Endothelial cell of umbilical vein (primary cell): ENCODE measurements at regions of chr1 and their contacts with region 1.

Region 1: DNA sequence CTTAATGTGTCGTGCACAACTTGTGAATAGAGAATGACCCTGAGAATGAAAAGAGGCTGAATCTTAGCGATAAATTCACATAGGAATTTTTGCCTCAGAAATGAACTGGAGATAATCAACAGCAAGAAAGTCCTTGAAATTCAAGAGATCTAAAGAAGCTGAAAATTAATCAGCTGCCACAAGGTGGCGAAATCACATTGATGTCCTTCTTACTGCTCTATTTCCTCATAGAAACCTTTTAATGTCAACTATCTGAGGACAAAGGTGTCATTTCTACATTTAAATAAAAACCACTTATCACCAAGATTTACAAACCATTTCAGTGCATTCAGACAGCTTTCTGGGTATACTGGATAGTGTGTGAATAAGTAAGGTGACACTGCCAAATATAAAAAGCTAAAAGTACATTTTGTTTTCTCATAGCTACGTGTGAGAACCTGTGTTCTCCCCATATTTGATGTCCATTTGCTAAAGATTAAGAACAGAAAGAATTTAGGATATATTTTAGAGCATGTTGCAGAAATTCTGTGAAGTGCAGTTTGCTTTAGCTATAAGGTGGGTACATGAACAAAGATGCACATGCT is 485.3 kb upstream of the PTBP2 start:
- DNase-seq: peak; percentile 80
- H3K4me3 ChIP-seq: no peak overlapping the region
- H3K27ac ChIP-seq: no peak overlapping the region
- H3K4me1 ChIP-seq: peaks cover 3% of the 10 kb centered on the region
- H3K27me3 ChIP-seq: peaks cover 2% of the 10 kb centered on the region in 2 experiments
- CTCF ChIP-seq: peak; percentile 40 to 49
- POLR2A ChIP-seq: no peak

Region 2: GRCh38 chr1:95916616-95917015 is 319.6 kb before region 1 on chr1:
- CTCF ChIA-PET with region 1: interaction called, 7 read pairs
- POLR2A ChIA-PET with region 1: no interaction called
- dilution Hi-C with region 1: no loop called
- intact Hi-C with region 1: loop called (anchors 1 kb)
- DNase-seq: peak; percentile 46
- H3K4me3 ChIP-seq: no peak overlapping the region
- H3K27ac ChIP-seq: no peak overlapping the region
- H3K4me1 ChIP-seq: no peaks in the 10 kb centered on the region
- H3K27me3 ChIP-seq: no peaks in the 10 kb centered on the region
- CTCF ChIP-seq: peak; percentile 25 to 51
- POLR2A ChIP-seq: no peak

Region 3: GRCh38 chr1:96306809-96307208 is 70.6 kb after region 1 on chr1:
- CTCF ChIA-PET with region 1: no interaction called
- POLR2A ChIA-PET with region 1: no interaction called
- dilution Hi-C with region 1: no loop called
- intact Hi-C with region 1: no loop called
- DNase-seq: no peak
- H3K4me3 ChIP-seq: no peak overlapping the region
- H3K27ac ChIP-seq: no peak overlapping the region
- H3K4me1 ChIP-seq: no peaks in the 10 kb centered on the region
- H3K27me3 ChIP-seq: peaks cover 0 to 2% of the 10 kb centered on the region in 2 experiments
- CTCF ChIP-seq: no peak
- POLR2A ChIP-seq: no peak

Region 4: GRCh38 chr1:96388421-96389310 is 152.4 kb after region 1 on chr1:
- CTCF ChIA-PET with region 1: interaction called, 12 read pairs
- POLR2A ChIA-PET with region 1: no interaction called
- dilution Hi-C with region 1: no loop called
- intact Hi-C with region 1: loop called (anchors 5 kb)
- DNase-seq: peak; percentile 98
- H3K4me3 ChIP-seq: no peak overlapping the region
- H3K27ac ChIP-seq: peak overlapping the region; percentile 93
- H3K4me1 ChIP-seq: peaks cover 22% of the 10 kb centered on the region
- H3K27me3 ChIP-seq: no peaks in the 10 kb centered on the region
- CTCF ChIP-seq: no peak
- POLR2A ChIP-seq: peak; percentile 36

Region 5: GRCh38 chr1:96756789-96757188 is 520.5 kb after region 1 on chr1:
- CTCF ChIA-PET with region 1: interaction called, 4 read pairs
- POLR2A ChIA-PET with region 1: no interaction called
- dilution Hi-C with region 1: no loop called
- intact Hi-C with region 1: loop called (anchors 10 kb)
- DNase-seq: no peak
- H3K4me3 ChIP-seq: no peak overlapping the region
- H3K27ac ChIP-seq: no peak overlapping the region
- H3K4me1 ChIP-seq: no peaks in the 10 kb centered on the region
- H3K27me3 ChIP-seq: no peaks in the 10 kb centered on the region
- CTCF ChIP-seq: no peak
- POLR2A ChIP-seq: no peak

Region 6: GRCh38 chr1:97050501-97050900 is 814.3 kb after region 1 on chr1:
- CTCF ChIA-PET with region 1: interaction called, 21 read pairs
- POLR2A ChIA-PET with region 1: no interaction called
- dilution Hi-C with region 1: no loop called
- intact Hi-C with region 1: no loop called
- DNase-seq: peak; percentile 62
- H3K4me3 ChIP-seq: no peak overlapping the region
- H3K27ac ChIP-seq: no peak overlapping the region
- H3K4me1 ChIP-seq: no peaks in the 10 kb centered on the region
- H3K27me3 ChIP-seq: no peaks in the 10 kb centered on the region
- CTCF ChIP-seq: peak; percentile 19 to 47
- POLR2A ChIP-seq: no peak